HEK293T (cell line): ENCODE measurements at regions of chr9 and their contacts with region 1.

Region 1: DNA sequence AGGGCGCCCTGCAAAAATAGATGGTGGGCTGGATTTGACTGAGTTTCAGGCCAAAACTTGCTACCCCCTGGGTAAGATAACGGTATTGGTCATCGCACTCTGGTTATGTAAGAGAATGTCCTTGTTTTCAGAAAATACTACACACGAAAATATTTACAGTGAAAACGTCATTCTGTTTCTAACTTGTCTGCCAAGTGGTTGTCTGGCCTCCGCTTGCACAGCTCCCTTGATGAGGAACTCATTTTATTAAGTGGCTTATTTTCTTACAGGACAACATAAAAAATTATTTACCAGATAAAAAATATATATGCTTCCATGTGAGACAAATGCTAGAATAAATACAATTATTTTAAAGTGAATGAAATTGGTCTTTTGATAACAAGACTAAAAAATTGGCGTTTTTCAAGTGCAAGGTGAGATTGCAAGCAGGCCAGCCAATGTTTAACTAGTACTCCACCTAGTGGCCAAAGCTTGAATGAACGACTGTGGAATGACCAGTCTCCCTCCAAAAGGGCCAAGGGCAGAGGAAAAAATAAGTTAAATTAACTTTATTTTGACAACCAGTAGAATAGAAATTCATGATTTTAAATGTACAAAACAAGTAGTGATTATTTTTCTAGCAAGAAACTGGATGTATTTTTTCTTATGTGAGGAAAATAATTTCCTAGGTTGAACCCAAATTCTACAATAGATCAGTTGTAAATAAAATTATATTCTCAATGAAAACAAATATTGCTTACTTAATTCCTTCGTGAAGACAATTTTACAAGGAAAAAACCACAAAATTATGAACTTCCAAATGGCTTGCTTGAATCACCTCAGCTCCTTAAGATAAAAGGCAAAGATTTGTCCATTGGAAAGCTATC is 93.2 kb downstream of the ZFAND5 start:
- DNase-seq: peak; percentile 70

Region 2: DNA sequence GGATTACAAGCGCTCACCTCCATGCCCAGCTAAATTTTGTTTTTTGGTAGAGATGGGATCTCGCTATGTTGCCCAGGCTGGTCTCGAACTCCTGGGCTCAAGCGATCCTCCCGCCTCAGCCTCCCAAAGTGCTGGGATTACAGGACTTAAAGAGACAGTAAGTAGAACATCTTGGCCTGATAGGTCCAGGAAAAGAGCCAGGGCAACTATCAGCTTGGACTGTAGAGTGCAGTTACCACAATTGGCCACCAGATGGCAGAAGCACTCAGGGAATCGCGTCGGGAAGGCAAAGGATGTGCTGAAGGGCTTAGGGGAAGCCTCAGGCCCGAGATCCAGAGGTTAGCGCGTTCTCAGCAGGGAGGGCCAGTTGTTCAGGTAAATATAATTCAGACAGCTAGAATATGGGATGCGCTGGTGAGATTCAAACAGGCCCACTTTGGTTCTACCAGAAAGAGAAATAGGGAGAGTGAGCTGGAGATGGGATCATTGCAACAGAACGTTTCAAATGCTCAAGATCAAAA is 232.9 kb before region 1 on chr9:
- CTCF ChIA-PET with region 1: interaction called, 20 read pairs
- POLR2A ChIA-PET with region 1: no interaction called
- DNase-seq: peak; percentile 82

Region 3: GRCh38 chr9:72169178-72169577 is 102.7 kb before region 1 on chr9:
- CTCF ChIA-PET with region 1: no interaction called
- POLR2A ChIA-PET with region 1: no interaction called
- DNase-seq: no peak

Region 4: DNA sequence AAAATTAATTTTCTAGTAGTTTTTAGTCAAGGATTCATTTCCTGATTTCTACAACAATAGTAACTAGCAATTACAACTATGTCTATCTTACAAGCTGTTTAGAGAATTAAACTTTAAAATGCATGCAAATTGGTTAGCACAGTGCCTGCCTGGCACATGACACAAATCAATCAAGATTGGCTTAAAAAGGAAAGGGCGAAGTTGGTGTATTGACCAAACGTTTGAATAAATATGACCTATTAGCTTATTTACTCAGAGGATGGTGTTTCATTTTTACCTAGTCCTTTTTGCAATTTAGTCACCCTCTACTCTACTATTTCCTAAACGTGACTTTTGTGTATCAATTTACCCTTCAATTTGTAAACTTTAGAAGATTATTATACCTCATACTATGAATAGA is 39.1 kb before region 1 on chr9:
- CTCF ChIA-PET with region 1: no interaction called
- POLR2A ChIA-PET with region 1: no interaction called
- DNase-seq: no peak

Region 5: DNA sequence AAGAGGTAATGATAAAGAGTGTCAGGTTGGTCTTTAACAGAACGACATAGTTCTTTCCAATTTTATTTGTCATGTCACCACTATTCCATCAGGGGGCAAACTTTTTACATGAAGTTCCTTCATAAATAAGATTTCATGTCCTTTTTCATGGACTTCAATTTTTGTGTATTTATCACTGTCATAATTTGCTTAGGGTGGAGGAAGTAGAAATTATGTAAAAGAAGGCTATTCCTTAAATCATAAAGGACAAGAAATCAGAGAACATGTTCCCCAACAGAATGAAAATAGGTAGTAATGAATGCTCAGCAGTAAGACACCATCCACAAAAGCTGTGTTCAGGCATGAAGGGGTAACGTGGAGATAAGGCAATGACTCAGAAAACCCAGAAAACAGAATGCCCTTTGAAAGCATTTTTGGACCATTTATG is 20.4 kb after region 1 on chr9:
- CTCF ChIA-PET with region 1: no interaction called
- POLR2A ChIA-PET with region 1: no interaction called
- DNase-seq: no peak